ENCODE measurements at regions of chr6 and their contacts with region 1.

Region 1: DNA sequence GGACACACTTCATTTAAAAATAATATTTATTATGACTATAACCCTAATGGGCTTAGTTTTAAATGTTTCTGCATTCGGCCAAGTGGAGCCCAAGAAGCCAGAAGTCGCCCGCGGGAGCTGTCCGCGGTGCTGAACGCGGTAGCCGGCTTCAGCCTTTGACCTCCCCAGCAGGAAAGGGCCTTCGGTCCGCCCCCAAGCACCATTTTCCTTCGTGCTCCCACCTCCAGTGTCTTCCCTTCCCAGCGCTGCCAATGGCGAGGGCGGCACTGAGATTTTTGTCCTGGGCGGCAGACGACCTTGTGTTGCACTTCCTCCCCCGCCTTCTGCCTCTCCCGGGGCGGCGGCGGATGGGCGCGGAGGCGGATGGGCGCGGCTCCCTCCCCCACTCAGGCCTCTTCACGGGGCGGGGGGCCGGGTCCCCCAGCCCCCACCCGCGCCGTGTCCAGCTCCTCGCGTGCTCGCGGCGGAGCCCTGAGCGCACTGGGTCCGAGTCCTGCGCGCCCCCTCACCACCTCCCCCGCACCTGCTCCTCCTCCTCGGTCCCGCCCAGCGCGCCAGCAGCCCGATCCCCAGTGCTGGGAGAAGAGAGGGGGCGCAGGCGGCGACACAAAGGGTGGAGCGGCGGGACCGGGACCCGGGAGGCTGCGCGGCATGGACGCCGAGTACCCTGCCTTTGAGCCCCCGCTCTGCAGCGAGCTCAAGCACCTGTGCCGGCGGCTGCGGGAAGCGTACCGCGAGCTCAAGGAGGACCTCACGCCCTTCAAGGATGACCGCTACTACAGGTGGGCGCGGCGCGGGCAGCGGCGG is 23.6 kb upstream of the TMEM181 start:
- DNase-seq: peak; percentile 62
- H3K4me3 Mint-ChIP-seq: peak overlapping the region; percentile 78
- H3K27ac Mint-ChIP-seq: no peak overlapping the region
- H3K4me1 Mint-ChIP-seq: no peaks in the 10 kb centered on the region
- H3K27me3 Mint-ChIP-seq: peaks cover 44% of the 10 kb centered on the region

Region 2: GRCh38 chr6:158518191-158519127 is 17.8 kb before region 1 on chr6:
- intact Hi-C with region 1: loop called (anchors 1 kb)
- DNase-seq: peak; percentile 60
- H3K4me3 Mint-ChIP-seq: peak overlapping the region; percentile 86
- H3K27ac Mint-ChIP-seq: peak overlapping the region; percentile 87
- H3K4me1 Mint-ChIP-seq: peaks cover 34% of the 10 kb centered on the region
- H3K27me3 Mint-ChIP-seq: peaks cover 20% of the 10 kb centered on the region

Measured in activated T-helper 1 cell treated with anti-CD3 and anti-CD28 coated beads, Interleukin-12 subunit alpha, Interleukin-12 subunit beta, Interleukin-2, Interleukin-4 antibody, amounts not matched to agents 30 ng/mL and 10 ng/mL and 1 ng/mL, durations not matched to agents 14 hours and 24 hours and 36 hours (primary cell).